Right ventricle myocardium superior (tissue), 1 donor: ENCODE measurements at regions of chr6 and their contacts with region 1.

Region 1: DNA sequence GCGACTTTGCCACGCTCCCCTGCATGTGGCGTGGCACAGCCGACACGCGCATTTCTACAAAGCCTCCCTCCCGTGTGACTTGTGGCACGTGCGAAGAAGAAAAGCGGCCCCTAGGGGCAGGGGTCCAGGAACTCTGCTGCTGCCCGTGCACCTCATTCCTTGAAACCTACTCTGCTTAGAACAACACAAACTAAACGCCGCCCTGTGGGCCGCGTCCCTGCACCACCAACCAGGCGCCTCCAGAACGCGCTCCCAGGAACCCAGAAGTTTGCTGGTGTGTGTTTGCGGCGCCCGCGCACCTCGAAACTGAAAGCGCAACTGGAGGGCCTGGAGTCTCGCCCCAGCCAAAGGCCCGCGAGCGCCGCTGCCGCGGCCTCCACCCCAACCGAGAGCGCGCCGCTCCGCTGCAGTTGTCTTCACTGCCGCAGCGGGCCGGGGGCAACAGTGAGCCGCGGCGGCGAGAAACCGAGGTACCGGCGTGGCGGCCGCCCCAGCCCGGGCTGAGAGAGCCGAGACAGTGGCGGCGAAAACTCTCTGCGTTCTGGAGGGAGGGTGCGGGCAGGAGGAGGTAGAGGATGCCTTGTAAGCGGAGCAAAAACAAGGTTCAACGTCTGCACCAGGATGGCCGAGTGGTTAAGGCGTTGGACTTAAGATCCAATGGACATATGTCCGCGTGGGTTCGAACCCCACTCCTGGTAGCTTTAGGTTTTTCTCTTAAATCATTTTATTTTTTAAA is 65.8 kb downstream of the STX11 start:
- DNase-seq: peak; percentile 95
- ATAC-seq: peak; percentile 96

Region 2: GRCh38 chr6:143708889-143709288 is 507.2 kb before region 1 on chr6:
- intact Hi-C with region 1: no loop called
- DNase-seq: no peak
- ATAC-seq: no peak

Region 3: GRCh38 chr6:144104898-144105487 is 111.1 kb before region 1 on chr6:
- intact Hi-C with region 1: loop called (anchors 2 kb)
- DNase-seq: no peak
- ATAC-seq: peak; percentile 97

Region 4: GRCh38 chr6:144149891-144150709 is 66.0 kb before region 1 on chr6 and contains the start of gene STX11:
- intact Hi-C with region 1: loop called (anchors 2 kb)
- DNase-seq: peak; percentile 89
- ATAC-seq: peak; percentile 96
- total RNA-seq, gene STX11: 8.9 TPM

Region 5: DNA sequence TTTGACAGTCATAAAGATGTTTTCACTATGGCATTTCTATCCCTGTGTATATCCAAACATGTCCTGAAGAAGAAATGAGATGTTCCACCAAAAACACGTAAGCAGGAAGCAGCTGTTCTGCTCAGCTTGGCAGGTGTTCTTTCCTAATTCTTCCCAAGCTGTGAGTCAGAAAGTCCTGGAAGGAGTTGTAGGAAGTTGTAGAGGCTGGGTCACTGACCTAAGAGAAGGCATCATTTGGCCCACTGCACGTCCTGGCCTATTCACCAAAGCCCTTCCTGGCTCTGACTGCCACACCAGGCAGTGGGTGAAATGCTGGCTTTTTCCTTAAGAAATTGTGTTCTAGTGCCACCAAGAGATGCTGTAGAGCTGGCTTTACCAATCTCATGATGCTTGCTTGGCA is 25.5 kb before region 1 on chr6:
- intact Hi-C with region 1: no loop called
- DNase-seq: peak; percentile 41
- ATAC-seq: no peak

Region 6: GRCh38 chr6:144284783-144285547 is 68.9 kb after region 1 on chr6 and contains the start of gene UTRN:
- intact Hi-C with region 1: loop called (anchors 5 kb)
- DNase-seq: peak; percentile 89
- ATAC-seq: peak; percentile 84
- total RNA-seq, gene UTRN: 65.8 TPM